ENCODE measurements at regions of chr1 and their contacts with region 1.

Region 1: GRCh38 chr1:193338194-193338593 is 151.8 kb upstream of the B3GALT2 start:
- DNase-seq: no peak
- H3K4me3 Mint-ChIP-seq: no peak overlapping the region
- H3K27ac Mint-ChIP-seq: no peak overlapping the region
- H3K4me1 Mint-ChIP-seq: peaks cover 6% of the 10 kb centered on the region
- H3K27me3 Mint-ChIP-seq: no peaks in the 10 kb centered on the region

Region 2: GRCh38 chr1:193183019-193183627 is 155.1 kb before region 1 on chr1:
- CTCF ChIA-PET with region 1: interaction called, 6 read pairs
- POLR2A ChIA-PET with region 1: no interaction called
- intact Hi-C with region 1: loop called (anchors 1 kb)
- DNase-seq: no peak
- H3K4me3 Mint-ChIP-seq: no peak overlapping the region
- H3K27ac Mint-ChIP-seq: no peak overlapping the region
- H3K4me1 Mint-ChIP-seq: peaks cover 41% of the 10 kb centered on the region
- H3K27me3 Mint-ChIP-seq: no peaks in the 10 kb centered on the region

Region 3: DNA sequence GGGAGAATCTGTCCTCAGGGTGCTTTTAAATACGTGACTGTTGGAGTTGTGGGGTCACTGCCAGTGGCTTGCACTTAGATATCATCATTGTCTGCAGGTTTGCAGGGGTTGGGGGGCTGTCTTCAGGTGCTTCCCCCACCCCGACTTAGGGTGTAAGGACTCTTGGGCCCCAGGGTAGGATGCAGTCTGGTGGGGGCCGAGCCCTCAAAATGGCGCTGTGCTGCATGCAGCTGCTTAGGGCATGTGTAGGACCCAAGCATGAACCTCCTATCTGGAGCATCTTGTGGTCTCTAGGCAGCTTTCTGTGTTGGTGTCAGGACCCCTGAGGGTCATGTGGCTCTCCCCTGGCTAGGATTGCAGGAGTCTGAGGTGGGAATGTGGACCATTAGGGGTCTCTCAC is 96.2 kb before region 1 on chr1:
- CTCF ChIA-PET with region 1: no interaction called
- POLR2A ChIA-PET with region 1: no interaction called
- intact Hi-C with region 1: no loop called
- DNase-seq: no peak
- H3K4me3 Mint-ChIP-seq: no peak overlapping the region
- H3K27ac Mint-ChIP-seq: no peak overlapping the region
- H3K4me1 Mint-ChIP-seq: peaks cover 34% of the 10 kb centered on the region
- H3K27me3 Mint-ChIP-seq: no peaks in the 10 kb centered on the region

Region 4: GRCh38 chr1:193270996-193271395 is 67.2 kb before region 1 on chr1:
- CTCF ChIA-PET with region 1: no interaction called
- POLR2A ChIA-PET with region 1: no interaction called
- intact Hi-C with region 1: no loop called
- DNase-seq: no peak
- H3K4me3 Mint-ChIP-seq: no peak overlapping the region
- H3K27ac Mint-ChIP-seq: no peak overlapping the region
- H3K4me1 Mint-ChIP-seq: no peaks in the 10 kb centered on the region
- H3K27me3 Mint-ChIP-seq: no peaks in the 10 kb centered on the region

Region 5: DNA sequence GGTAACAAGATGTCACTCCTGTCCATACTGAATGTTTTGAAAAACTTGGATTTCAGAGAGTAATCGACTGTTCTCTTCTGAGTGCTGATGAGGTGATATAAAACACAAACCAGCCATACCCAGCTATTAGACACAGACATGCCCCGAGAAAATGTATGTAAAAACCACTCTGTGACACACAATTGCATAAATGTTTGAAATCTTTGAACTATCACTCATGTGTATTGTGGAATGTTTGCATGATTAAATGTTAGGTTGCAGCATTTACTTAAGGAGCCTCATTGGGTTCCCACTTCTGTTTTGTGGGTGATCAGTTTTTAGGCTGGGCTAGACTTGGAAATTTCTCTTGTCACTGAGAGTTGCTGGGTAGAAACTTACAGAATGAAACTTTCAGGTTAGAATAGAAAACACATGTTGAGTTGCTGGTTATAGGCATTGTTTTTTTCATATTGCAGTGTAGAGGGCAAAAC is 118.7 kb after region 1 on chr1:
- CTCF ChIA-PET with region 1: no interaction called
- POLR2A ChIA-PET with region 1: no interaction called
- intact Hi-C with region 1: no loop called
- DNase-seq: no peak
- H3K4me3 Mint-ChIP-seq: no peak overlapping the region
- H3K27ac Mint-ChIP-seq: no peak overlapping the region
- H3K4me1 Mint-ChIP-seq: peaks cover 29% of the 10 kb centered on the region
- H3K27me3 Mint-ChIP-seq: no peaks in the 10 kb centered on the region

Region 6: DNA sequence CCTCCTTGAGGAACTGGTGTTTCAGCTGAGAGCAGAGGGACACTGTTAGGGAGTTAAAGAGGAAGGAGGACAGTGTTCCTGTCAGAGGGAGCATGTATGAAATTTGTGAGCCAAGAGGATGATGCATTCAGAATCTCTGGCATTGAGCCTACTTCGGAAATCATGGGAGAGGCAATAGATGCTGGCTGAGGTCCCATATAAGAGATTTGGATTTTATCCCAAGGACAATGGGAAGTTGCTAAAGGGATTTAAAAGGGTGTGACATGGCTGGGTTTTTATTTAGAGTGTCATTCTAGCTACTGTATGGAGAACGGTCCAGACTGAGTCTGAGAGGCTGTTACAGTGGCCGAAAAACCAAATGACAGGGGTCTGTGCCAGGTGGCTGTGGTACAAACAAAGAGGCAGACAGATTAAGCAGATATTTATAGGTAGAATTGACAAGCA is 251.4 kb after region 1 on chr1:
- CTCF ChIA-PET with region 1: no interaction called
- POLR2A ChIA-PET with region 1: no interaction called
- intact Hi-C with region 1: no loop called
- DNase-seq: no peak
- H3K4me3 Mint-ChIP-seq: no peak overlapping the region
- H3K27ac Mint-ChIP-seq: no peak overlapping the region
- H3K4me1 Mint-ChIP-seq: peaks cover 20% of the 10 kb centered on the region
- H3K27me3 Mint-ChIP-seq: no peaks in the 10 kb centered on the region

Measured in activated CD4-positive, alpha-beta memory T cell treated with anti-CD3 and anti-CD28 coated beads for 36 hours (primary cell).